ENCODE measurements at regions of chr7 and their contacts with region 1.

Region 1: GRCh38 chr7:20598459-20599309 is 16.8 kb upstream of the ABCB5 start:
- DNase-seq: peak in 1 of 2 donors; percentile 84
- H3K4me3 ChIP-seq: no peak overlapping the region
- H3K27ac ChIP-seq: no peak overlapping the region
- H3K4me1 ChIP-seq: peaks cover 0 to 7% (median 0%) of the 10 kb centered on the region in 4 donors
- H3K27me3 ChIP-seq: peaks cover 0 to 5% (median 0%) of the 10 kb centered on the region in 3 donors
- CTCF ChIP-seq: peak in 5 of 7 experiments; percentile 59 to 76 (median 72)
- EP300 ChIP-seq: no peak
- POLR2A ChIP-seq: no peak

Region 2: GRCh38 chr7:19713676-19714075 is 885.0 kb before region 1 on chr7:
- intact Hi-C with region 1: loop called (anchors 10 kb)
- DNase-seq: peak in 1 of 2 donors; percentile 70
- H3K4me3 ChIP-seq: no peak overlapping the region
- H3K27ac ChIP-seq: no peak overlapping the region
- H3K4me1 ChIP-seq: peaks cover 0 to 10% (median 8%) of the 10 kb centered on the region in 4 donors
- H3K27me3 ChIP-seq: no peaks in the 10 kb centered on the region
- CTCF ChIP-seq: peak in 4 of 7 experiments; percentile 26 to 48 (median 42)
- EP300 ChIP-seq: no peak
- POLR2A ChIP-seq: no peak

Region 3: DNA sequence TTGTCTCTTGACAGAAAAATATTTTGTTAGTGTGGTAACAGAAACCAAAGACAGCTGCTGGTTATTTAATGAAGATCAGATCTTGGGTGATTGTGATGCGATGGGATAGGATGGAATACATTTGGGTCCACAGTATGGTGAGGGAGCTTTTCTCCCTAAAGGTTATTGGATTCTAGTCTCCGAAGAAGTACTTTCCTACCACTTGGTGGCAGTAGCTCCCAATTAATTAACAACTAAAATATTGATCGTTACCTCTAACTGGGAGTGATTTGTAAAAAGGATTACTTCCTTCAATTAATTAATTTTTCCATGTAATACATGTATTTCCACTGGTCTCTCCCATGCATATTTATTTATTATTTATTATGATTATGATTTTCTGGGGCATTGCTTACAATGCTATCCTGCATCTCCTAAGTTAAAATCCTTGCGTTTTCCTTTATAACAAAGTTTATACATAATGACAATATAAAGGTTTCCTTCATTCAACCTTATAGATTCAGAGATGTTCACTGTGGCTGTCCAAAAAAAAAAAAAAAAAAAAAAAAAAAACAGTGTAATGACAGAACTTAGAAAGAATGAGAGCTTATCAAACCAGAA is 850.8 kb before region 1 on chr7:
- intact Hi-C with region 1: loop called (anchors 10 kb)
- DNase-seq: peak in 1 of 2 donors; percentile 69
- H3K4me3 ChIP-seq: no peak overlapping the region
- H3K27ac ChIP-seq: no peak overlapping the region
- H3K4me1 ChIP-seq: no peaks in the 10 kb centered on the region
- H3K27me3 ChIP-seq: no peaks in the 10 kb centered on the region
- CTCF ChIP-seq: peak in 4 of 7 experiments; percentile 26 to 55 (median 33)
- EP300 ChIP-seq: no peak
- POLR2A ChIP-seq: no peak

Region 4: GRCh38 chr7:20158684-20159083 is 440.0 kb before region 1 on chr7:
- intact Hi-C with region 1: loop called (anchors 10 kb)
- DNase-seq: no peak
- H3K4me3 ChIP-seq: no peak overlapping the region
- H3K27ac ChIP-seq: no peak overlapping the region
- H3K4me1 ChIP-seq: peaks cover 0 to 9% (median 3%) of the 10 kb centered on the region in 4 donors
- H3K27me3 ChIP-seq: no peaks in the 10 kb centered on the region
- CTCF ChIP-seq: peak in 3 of 7 experiments; percentile 11 to 28 (median 25)
- EP300 ChIP-seq: no peak
- POLR2A ChIP-seq: no peak

Region 5: GRCh38 chr7:21293771-21294170 is 695.1 kb after region 1 on chr7:
- intact Hi-C with region 1: no loop called
- DNase-seq: no peak
- H3K4me3 ChIP-seq: no peak overlapping the region
- H3K27ac ChIP-seq: no peak overlapping the region
- H3K4me1 ChIP-seq: no peaks in the 10 kb centered on the region
- H3K27me3 ChIP-seq: no peaks in the 10 kb centered on the region
- CTCF ChIP-seq: no peak
- EP300 ChIP-seq: no peak
- POLR2A ChIP-seq: no peak

Region 6: GRCh38 chr7:21504016-21504415 is 905.3 kb after region 1 on chr7:
- intact Hi-C with region 1: no loop called
- DNase-seq: peak in 1 of 2 donors; percentile 63
- H3K4me3 ChIP-seq: no peak overlapping the region
- H3K27ac ChIP-seq: no peak overlapping the region
- H3K4me1 ChIP-seq: peaks cover 0 to 5% (median 0%) of the 10 kb centered on the region in 4 donors
- H3K27me3 ChIP-seq: no peaks in the 10 kb centered on the region
- CTCF ChIP-seq: no peak
- EP300 ChIP-seq: no peak
- POLR2A ChIP-seq: no peak